ENCODE measurements at regions of chr6 and their contacts with region 1.

Region 1: GRCh38 chr6:133551847-133552341 is 310.7 kb downstream of the EYA4 start:
- DNase-seq: peak; percentile 99
- H3K4me3 ChIP-seq: no peak overlapping the region
- H3K27ac ChIP-seq: peak overlapping the region; percentile 94
- H3K27me3 ChIP-seq: no peaks in the 10 kb centered on the region
- CTCF ChIP-seq: no peak

Region 2: DNA sequence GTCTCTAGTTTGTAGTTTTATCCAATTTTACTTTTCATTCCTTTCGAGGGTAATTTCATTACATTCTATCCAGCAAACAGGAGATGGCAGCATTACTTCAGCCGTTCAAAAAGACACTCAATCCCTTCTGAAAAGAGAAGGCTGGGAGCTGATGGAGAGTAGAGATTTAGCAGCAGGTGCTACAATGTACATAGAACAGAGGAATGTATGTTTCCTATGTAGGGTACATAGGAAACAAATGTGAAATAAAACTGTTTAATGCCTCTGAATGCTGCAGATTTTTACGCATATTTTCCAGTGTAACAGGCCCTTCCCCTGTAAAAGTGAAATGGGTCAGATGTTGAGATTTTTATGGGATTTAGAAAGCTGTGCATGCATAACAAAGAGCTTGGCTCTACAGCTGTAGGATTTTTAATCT is 721.6 kb before region 1 on chr6:
- CTCF ChIA-PET with region 1: interaction called, 15 read pairs
- POLR2A ChIA-PET with region 1: no interaction called
- DNase-seq: no peak
- H3K4me3 ChIP-seq: no peak overlapping the region
- H3K27ac ChIP-seq: no peak overlapping the region
- H3K27me3 ChIP-seq: no peaks in the 10 kb centered on the region
- CTCF ChIP-seq: peak; percentile 71

Region 3: DNA sequence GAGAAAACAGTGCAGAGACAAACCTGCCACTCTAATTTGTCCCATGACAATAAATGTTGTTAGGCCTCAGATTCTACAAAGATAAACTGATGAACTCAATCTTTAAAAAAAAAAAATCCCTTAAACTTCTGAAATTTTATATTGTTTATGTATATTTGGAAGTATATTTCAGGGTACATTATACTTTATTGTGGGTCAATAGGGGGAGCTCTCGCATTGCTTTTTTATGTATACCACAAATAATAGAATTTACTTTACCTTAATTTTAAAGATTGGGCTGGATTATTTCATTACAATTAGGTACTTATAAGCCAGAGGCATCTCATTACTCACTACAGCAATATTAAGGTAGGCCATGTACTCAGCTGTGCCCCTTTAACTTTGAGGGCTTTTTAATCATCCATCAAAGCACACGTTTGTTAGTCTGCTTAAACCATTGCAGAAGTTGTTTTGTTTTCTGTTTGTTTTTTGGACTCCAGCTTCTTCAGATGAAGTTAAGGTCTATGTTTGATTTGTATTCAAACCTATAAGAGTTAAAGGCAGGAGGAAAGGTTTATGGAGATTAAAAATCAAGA is 367.0 kb before region 1 on chr6:
- CTCF ChIA-PET with region 1: interaction called, 26 read pairs
- POLR2A ChIA-PET with region 1: no interaction called
- DNase-seq: no peak
- H3K4me3 ChIP-seq: no peak overlapping the region
- H3K27ac ChIP-seq: no peak overlapping the region
- H3K27me3 ChIP-seq: no peaks in the 10 kb centered on the region
- CTCF ChIP-seq: peak; percentile 63

Region 4: GRCh38 chr6:133644892-133645619 is 93.2 kb after region 1 on chr6:
- CTCF ChIA-PET with region 1: no interaction called
- POLR2A ChIA-PET with region 1: interaction called, 10 read pairs
- DNase-seq: peak; percentile 78
- H3K4me3 ChIP-seq: no peak overlapping the region
- H3K27ac ChIP-seq: no peak overlapping the region
- H3K27me3 ChIP-seq: no peaks in the 10 kb centered on the region
- CTCF ChIP-seq: no peak

Region 5: DNA sequence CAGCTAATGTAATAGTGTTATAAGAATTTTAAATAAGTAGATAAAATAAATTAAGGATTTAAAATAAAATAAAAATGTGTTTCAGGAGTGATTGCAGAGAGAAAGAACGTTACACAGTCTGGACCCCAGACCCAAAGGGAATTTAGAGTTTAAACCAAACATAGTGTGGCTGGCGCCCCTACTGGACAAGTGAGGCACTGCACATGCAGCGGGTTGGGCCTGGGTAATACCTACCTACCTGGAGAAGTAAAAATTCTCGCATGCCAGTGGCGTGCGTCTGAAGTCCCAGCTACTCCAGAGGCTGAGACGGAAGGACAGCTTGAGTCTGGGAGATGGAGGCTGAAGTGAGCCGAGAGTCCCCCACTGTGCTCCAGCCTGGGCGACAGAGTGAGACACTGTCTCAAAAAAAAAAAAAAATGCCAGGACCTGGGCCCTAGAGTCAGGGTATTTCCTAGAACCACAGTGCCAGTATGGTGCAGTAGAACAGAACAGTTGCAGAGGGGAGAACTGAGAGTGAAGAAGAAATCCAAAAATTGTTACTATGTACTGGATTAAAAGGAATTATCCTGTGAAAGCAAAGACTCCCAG is 265.7 kb after region 1 on chr6:
- CTCF ChIA-PET with region 1: no interaction called
- POLR2A ChIA-PET with region 1: no interaction called
- DNase-seq: no peak
- H3K4me3 ChIP-seq: no peak overlapping the region
- H3K27ac ChIP-seq: no peak overlapping the region
- H3K27me3 ChIP-seq: no peaks in the 10 kb centered on the region
- CTCF ChIP-seq: peak; percentile 58

Region 6: DNA sequence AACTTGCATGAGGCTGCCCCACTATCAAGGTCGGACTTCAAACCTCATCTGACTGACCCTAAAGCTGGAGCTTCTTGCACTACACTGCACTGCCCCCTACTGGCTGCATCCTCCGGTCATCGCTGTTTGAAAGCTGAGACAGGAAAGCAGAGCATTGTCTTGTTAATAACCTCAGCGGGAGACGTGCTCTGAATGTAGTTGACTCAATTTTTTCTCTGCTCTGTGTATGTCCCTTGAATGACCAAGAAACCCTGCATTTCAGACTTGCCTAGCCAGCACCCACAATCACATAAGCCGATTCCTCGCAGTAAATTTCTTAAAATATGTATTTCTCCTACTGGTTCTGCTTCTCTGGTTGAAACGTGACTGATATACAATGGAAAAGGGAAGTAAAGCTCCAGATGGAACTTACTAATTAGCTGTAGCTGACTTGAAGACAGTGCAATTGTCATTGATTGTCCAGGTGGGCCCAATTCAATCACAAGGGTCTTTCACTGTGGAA is 364.8 kb after region 1 on chr6:
- CTCF ChIA-PET with region 1: interaction called, 15 read pairs
- POLR2A ChIA-PET with region 1: interaction called, 4 read pairs
- DNase-seq: peak; percentile 89
- H3K4me3 ChIP-seq: no peak overlapping the region
- H3K27ac ChIP-seq: no peak overlapping the region
- H3K27me3 ChIP-seq: no peaks in the 10 kb centered on the region
- CTCF ChIP-seq: peak; percentile 97

Measured in AG04450 (cell line).